ENCODE measurements at regions of chr18 and their contacts with region 1.

Region 1: DNA sequence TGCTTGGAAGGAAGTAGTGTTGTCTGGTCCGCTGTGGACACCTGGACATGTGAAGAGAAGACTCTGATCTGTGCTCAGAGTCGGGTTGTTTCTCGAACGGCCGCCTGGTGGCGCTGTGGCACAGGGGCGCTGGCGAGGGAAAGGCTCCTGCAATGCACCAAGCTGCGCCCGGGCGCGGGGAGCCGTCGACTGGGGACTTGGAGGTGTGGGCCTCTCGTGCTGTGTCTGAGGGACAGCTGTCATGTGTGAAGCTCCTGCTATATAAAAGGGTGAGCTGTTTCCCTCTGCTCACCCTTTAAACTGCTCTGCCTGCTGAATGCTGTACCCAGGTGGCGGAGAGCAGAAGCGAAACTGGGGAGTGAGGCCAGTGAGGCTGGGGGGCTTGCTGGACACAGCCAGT is 44.0 kb downstream of the GNAL start:
- DNase-seq: peak; percentile 79 to 93
- ATAC-seq: peak; percentile 90
- H3K4me3 ChIP-seq: no peak overlapping the region
- H3K27ac ChIP-seq: no peak overlapping the region
- H3K4me1 ChIP-seq: no peaks in the 10 kb centered on the region
- H3K27me3 ChIP-seq: no peaks in the 10 kb centered on the region

Region 2: GRCh38 chr18:11654736-11655605 is 78.1 kb before region 1 on chr18:
- intact Hi-C with region 1: loop called in 1 of 2 experiments (anchors 10 kb)
- DNase-seq: peak in 1 of 2 donors; percentile 90
- ATAC-seq: peak; percentile 74
- H3K4me3 ChIP-seq: peak overlapping the region in 1 of 2 donors; percentile 10
- H3K27ac ChIP-seq: no peak overlapping the region
- H3K4me1 ChIP-seq: no peaks in the 10 kb centered on the region
- H3K27me3 ChIP-seq: no peaks in the 10 kb centered on the region

Region 3: DNA sequence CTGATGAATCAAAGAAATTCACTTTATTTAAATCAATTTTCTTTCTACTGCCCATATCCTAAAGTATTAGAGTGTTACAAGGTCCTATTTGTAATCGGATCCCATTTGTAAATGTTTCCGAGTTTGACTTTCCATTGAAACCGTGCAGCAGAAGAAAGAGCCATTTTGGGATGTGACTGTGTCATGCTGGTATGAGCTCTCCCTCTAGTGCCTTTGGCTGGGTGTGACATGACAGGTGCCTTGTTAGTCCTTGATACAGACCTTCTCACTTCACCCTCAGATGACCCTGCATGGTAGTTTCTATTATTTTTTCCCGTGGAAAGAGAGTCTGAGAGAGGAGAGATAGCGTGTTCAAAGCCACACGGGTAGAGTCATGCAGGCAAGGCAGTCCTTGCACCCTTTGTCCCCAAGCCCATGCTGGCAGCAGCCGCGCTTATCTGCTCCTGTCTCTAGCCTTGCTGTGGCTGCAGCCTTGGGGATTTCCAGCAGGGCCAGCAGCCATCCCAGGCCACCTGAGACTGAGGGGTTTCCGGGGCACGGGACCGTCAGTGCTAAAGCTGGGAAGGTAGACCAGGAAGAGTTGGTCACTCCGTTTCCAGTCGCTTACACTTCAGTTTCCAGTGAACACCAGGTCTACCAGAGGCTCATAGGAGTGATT is 139.6 kb after region 1 on chr18:
- intact Hi-C with region 1: loop called in 1 of 2 experiments (anchors 5 kb)
- DNase-seq: no peak
- ATAC-seq: no peak
- H3K4me3 ChIP-seq: no peak overlapping the region
- H3K27ac ChIP-seq: no peak overlapping the region
- H3K4me1 ChIP-seq: no peaks in the 10 kb centered on the region
- H3K27me3 ChIP-seq: no peaks in the 10 kb centered on the region

Region 4: GRCh38 chr18:12027046-12027445 is 294.0 kb after region 1 on chr18:
- intact Hi-C with region 1: loop called (anchors 10 kb)
- DNase-seq: peak in 1 of 2 donors; percentile 68
- ATAC-seq: no peak
- H3K4me3 ChIP-seq: no peak overlapping the region
- H3K27ac ChIP-seq: no peak overlapping the region
- H3K4me1 ChIP-seq: no peaks in the 10 kb centered on the region
- H3K27me3 ChIP-seq: no peaks in the 10 kb centered on the region

Region 5: GRCh38 chr18:12038639-12039417 is 305.8 kb after region 1 on chr18:
- intact Hi-C with region 1: loop called in 1 of 2 experiments (anchors 10 kb)
- DNase-seq: peak; percentile 87 to 94
- ATAC-seq: peak; percentile 98
- H3K4me3 ChIP-seq: peak overlapping the region; percentile 2 to 58
- H3K27ac ChIP-seq: no peak overlapping the region
- H3K4me1 ChIP-seq: no peaks in the 10 kb centered on the region
- H3K27me3 ChIP-seq: no peaks in the 10 kb centered on the region